ENCODE measurements at regions of chr1 and their contacts with region 1.

Region 1: GRCh38 chr1:181142096-181142958 is 53.8 kb downstream of the IER5 start:
- DNase-seq: peak; percentile 91
- H3K4me3 Mint-ChIP-seq: peak overlapping the region; percentile 40
- H3K27ac Mint-ChIP-seq: no peak overlapping the region
- H3K4me1 Mint-ChIP-seq: peaks cover 53% of the 10 kb centered on the region
- H3K27me3 Mint-ChIP-seq: no peaks in the 10 kb centered on the region
- CTCF ChIP-seq: peak; percentile 99

Region 2: DNA sequence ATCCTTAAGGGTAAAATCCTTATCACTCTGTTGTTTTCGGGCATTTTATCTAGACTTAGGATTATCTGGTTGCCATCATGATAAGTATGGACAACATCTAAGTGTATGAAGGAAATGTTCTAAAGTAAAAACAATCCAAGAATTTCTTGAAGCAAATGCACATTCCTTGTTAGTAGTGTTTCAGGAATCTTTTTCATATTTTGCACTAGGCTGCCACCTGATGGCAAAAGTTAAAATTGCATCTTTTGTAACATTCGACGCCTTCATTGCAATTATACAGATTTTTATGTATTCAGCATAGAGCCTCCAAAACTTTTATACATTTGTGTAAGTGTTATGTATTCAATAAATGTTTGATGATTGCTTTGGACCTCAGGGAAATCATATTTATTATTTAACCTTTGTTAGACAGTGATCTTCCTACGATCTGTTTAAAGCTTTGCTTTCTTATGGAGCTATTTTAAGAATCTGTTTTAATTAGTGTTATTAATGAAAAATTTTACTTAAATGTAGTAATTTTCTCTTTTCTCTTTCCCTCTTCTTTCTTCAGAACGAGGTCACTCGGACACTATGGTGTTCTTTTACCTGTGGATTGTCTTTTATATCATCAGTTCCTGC is 279.1 kb before region 1 on chr1:
- CTCF ChIA-PET with region 1: interaction called, 27 read pairs
- POLR2A ChIA-PET with region 1: interaction called, 3 read pairs
- intact Hi-C with region 1: no loop called
- DNase-seq: peak; percentile 81
- H3K4me3 Mint-ChIP-seq: no peak overlapping the region
- H3K27ac Mint-ChIP-seq: no peak overlapping the region
- H3K4me1 Mint-ChIP-seq: peaks cover 26% of the 10 kb centered on the region
- H3K27me3 Mint-ChIP-seq: no peaks in the 10 kb centered on the region
- CTCF ChIP-seq: peak; percentile 89

Region 3: DNA sequence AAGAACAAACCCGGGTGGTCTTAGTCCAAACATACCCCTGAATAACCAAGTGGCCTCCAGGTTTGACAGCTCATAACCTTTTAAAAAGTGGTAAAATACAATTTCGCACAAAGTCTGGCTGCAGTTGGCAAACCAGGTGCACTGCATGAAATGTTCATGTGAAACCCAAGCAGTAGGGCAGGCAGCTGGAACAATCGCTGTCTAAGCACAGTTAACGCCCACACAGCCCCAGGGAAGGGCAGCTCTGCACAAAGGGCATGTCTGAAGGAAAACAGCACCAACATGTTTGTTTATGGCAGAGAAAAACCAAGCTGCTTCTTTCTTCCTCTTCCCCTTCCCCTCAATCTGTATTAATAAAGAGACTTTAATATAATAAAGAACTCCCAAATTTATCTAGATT is 180.1 kb before region 1 on chr1:
- CTCF ChIA-PET with region 1: interaction called, 24 read pairs
- POLR2A ChIA-PET with region 1: no interaction called
- intact Hi-C with region 1: no loop called
- DNase-seq: no peak
- H3K4me3 Mint-ChIP-seq: no peak overlapping the region
- H3K27ac Mint-ChIP-seq: no peak overlapping the region
- H3K4me1 Mint-ChIP-seq: no peaks in the 10 kb centered on the region
- H3K27me3 Mint-ChIP-seq: no peaks in the 10 kb centered on the region
- CTCF ChIP-seq: no peak

Region 4: DNA sequence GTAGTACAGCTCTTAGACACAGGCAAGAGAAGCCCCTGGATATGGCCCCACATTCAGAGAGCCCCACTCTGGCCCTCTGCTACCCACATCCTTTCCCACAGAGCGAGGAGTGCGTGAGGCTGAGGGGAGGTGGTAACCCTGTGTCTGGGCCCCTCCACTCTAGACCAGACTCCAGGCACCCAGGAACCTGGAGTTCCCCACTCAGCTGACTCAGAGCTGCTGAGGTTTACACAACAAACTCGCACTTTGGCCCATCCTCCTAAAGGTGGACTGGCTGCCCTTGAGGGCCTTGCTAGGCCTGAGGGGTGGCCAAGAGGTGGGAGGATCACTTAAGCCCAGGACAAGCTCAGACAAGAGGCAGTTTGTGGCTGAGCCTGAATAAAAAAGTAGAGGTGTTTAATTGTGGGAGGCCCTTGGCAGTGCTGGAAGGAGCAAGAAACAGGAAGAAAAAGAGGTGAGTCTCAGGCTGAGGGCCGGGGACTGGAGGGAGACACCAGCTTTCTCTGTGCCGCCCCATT is 97.8 kb before region 1 on chr1:
- CTCF ChIA-PET with region 1: interaction called, 135 read pairs
- POLR2A ChIA-PET with region 1: interaction called, 40 read pairs
- intact Hi-C with region 1: no loop called
- DNase-seq: peak; percentile 99
- H3K4me3 Mint-ChIP-seq: peak overlapping the region; percentile 58
- H3K27ac Mint-ChIP-seq: peak overlapping the region; percentile 88
- H3K4me1 Mint-ChIP-seq: peaks cover 41% of the 10 kb centered on the region
- H3K27me3 Mint-ChIP-seq: no peaks in the 10 kb centered on the region
- CTCF ChIP-seq: no peak

Region 5: GRCh38 chr1:181105134-181106021 is 36.9 kb before region 1 on chr1:
- CTCF ChIA-PET with region 1: interaction called, 198 read pairs
- POLR2A ChIA-PET with region 1: interaction called, 1,402 read pairs
- intact Hi-C with region 1: no loop called
- DNase-seq: peak; percentile 95
- H3K4me3 Mint-ChIP-seq: peak overlapping the region; percentile 65
- H3K27ac Mint-ChIP-seq: peak overlapping the region; percentile 22
- H3K4me1 Mint-ChIP-seq: peaks cover 61% of the 10 kb centered on the region
- H3K27me3 Mint-ChIP-seq: no peaks in the 10 kb centered on the region
- CTCF ChIP-seq: no peak

Region 6: DNA sequence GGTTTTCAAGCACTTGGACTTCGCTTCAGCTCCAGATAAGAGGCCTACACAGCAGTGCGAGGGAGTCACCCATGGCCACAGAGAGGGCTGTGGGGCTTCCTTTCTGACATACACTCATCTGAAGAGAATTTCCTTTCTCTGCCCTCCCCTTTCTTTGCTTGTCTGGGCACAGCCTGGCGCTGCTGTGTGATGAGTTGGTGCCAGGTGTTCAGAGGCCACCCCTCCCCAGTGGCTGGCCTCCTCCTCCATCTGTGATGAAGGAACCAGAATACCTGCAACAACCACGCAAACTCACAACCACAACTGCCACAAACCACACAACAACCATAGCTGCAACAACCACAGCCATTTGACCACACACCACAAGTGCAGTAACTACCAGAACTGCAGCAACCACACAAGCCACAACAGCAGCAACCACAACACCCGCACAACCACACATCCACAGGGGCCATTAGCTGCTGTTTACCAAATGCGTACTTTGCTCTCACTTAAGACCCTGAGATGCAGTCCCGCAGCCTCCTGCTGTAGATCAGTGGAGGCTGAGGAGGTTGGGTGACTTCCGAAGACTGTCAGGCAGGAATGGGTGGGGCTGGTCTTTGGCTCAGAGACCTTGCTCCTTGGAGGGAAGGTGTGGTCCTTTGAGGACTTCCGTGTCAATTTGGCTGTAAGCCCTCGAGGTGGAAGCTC is 17.3 kb after region 1 on chr1:
- CTCF ChIA-PET with region 1: interaction called, 162 read pairs
- POLR2A ChIA-PET with region 1: interaction called, 15 read pairs
- intact Hi-C with region 1: no loop called
- DNase-seq: peak; percentile 94
- H3K4me3 Mint-ChIP-seq: peak overlapping the region; percentile 35
- H3K27ac Mint-ChIP-seq: peak overlapping the region; percentile 71
- H3K4me1 Mint-ChIP-seq: peaks cover 22% of the 10 kb centered on the region
- H3K27me3 Mint-ChIP-seq: no peaks in the 10 kb centered on the region
- CTCF ChIP-seq: no peak

Region 7: GRCh38 chr1:181206513-181206912 is 64.2 kb after region 1 on chr1:
- CTCF ChIA-PET with region 1: no interaction called
- POLR2A ChIA-PET with region 1: no interaction called
- intact Hi-C with region 1: no loop called
- DNase-seq: no peak
- H3K4me3 Mint-ChIP-seq: no peak overlapping the region
- H3K27ac Mint-ChIP-seq: no peak overlapping the region
- H3K4me1 Mint-ChIP-seq: no peaks in the 10 kb centered on the region
- H3K27me3 Mint-ChIP-seq: no peaks in the 10 kb centered on the region
- CTCF ChIP-seq: no peak

Region 8: GRCh38 chr1:181855380-181855779 is 713.1 kb after region 1 on chr1:
- CTCF ChIA-PET with region 1: no interaction called
- POLR2A ChIA-PET with region 1: no interaction called
- intact Hi-C with region 1: no loop called
- DNase-seq: no peak
- H3K4me3 Mint-ChIP-seq: no peak overlapping the region
- H3K27ac Mint-ChIP-seq: no peak overlapping the region
- H3K4me1 Mint-ChIP-seq: no peaks in the 10 kb centered on the region
- H3K27me3 Mint-ChIP-seq: no peaks in the 10 kb centered on the region
- CTCF ChIP-seq: no peak